ENCODE measurements at regions of chr22 and their contacts with region 1.

Region 1: GRCh38 chr22:24170248-24170630 is 11.0 kb upstream of the SUSD2 start:
- DNase-seq: no peak
- ATAC-seq: no peak
- H3K4me3 ChIP-seq: no peak overlapping the region
- H3K4me3 Mint-ChIP-seq: no peak overlapping the region
- H3K27ac ChIP-seq: no peak overlapping the region
- H3K27ac Mint-ChIP-seq: peak overlapping the region in 1 of 2 donors; percentile 43
- H3K4me1 ChIP-seq: peaks cover 34% of the 10 kb centered on the region
- H3K4me1 Mint-ChIP-seq: peaks cover 6 to 30% of the 10 kb centered on the region in 2 donors
- H3K27me3 ChIP-seq: no peaks in the 10 kb centered on the region
- H3K27me3 Mint-ChIP-seq: no peaks in the 10 kb centered on the region
- CTCF ChIP-seq: no peak

Region 2: DNA sequence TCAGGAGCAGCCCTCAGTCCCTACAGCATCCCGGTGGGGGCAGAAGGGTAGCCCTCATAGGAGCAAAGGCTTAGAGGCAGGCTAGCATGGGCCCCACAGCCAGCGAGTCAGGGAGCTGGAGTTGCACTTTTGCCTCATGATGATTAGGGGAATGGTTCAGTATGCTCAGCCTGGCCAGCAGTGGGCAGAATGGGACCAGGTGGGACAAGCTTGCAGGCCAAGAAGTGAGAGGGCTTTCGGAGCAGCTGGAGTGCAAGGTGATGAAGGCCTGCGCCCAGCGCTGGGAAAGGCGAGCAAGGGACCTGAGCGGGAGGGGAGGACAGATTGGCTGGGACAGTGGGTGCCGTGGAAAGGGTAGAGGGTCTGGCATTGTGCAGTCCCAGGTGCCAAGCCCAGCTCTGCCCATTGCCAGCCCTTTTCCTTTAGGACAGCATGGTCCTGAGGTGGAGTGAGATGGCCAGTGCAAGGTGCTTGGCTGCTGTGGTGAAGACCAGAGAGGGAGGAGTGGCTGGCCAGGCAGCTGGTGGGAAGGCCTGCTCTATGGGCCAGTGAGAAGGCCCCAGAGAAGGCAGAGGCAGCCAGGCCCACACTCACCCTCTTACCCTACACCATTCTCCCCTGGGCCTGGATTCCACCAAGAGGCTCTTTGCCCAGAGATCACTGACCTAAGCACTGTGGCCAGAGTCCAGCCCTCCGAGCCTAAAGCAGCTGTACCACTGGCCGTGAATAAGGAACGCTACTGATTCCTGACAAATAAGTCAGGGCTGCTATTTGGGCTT is 36.9 kb before region 1 on chr22:
- intact Hi-C with region 1: loop called (anchors 5 kb)
- DNase-seq: peak in 1 of 2 donors; percentile 73
- ATAC-seq: peak in 2 of 3 donors; percentile 42 to 52
- H3K4me3 ChIP-seq: no peak overlapping the region
- H3K4me3 Mint-ChIP-seq: no peak overlapping the region
- H3K27ac ChIP-seq: no peak overlapping the region
- H3K27ac Mint-ChIP-seq: peak overlapping the region in 1 of 2 donors; percentile 52
- H3K4me1 ChIP-seq: peaks cover 19% of the 10 kb centered on the region
- H3K4me1 Mint-ChIP-seq: peaks cover 0 to 19% of the 10 kb centered on the region in 2 donors
- H3K27me3 ChIP-seq: no peaks in the 10 kb centered on the region
- H3K27me3 Mint-ChIP-seq: no peaks in the 10 kb centered on the region
- CTCF ChIP-seq: no peak

Region 3: DNA sequence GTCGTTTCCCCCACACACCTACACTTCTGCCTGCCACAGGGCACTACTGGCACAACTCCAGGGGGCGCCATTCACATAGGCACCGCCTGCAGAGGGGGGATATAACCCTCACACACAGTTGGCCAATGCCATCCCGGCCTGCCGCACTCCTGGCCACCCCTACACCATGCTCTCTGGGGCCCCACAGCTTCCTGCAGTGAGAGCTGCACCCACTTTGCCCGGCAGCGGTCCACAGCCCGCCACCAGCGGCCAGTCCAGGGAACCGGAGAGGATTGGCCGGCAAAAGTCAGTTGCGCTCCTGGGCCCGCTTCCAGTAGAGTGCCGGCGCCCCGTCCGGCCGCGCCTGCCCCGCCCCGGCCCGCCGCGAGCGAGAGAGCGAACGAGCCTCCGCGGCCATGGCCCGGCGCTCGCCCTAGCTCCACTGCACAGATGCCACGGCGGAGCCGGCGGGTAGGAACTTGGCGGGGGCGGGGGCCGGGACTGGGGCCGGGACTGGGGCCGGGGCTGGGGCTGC is 14.6 kb before region 1 on chr22:
- intact Hi-C with region 1: no loop called
- DNase-seq: peak; percentile 47 to 69
- ATAC-seq: peak; percentile 36 to 57 (median 52)
- H3K4me3 ChIP-seq: peak overlapping the region; percentile 98
- H3K4me3 Mint-ChIP-seq: peak overlapping the region; percentile 94
- H3K27ac ChIP-seq: peak overlapping the region; percentile 70
- H3K27ac Mint-ChIP-seq: peak overlapping the region; percentile 83 to 88
- H3K4me1 ChIP-seq: peaks cover 78% of the 10 kb centered on the region
- H3K4me1 Mint-ChIP-seq: peaks cover 67 to 72% of the 10 kb centered on the region in 2 donors
- H3K27me3 ChIP-seq: no peaks in the 10 kb centered on the region
- H3K27me3 Mint-ChIP-seq: no peaks in the 10 kb centered on the region
- CTCF ChIP-seq: no peak

Measured in natural killer cell (primary cell).